GM10248 (cell line): ENCODE measurements at regions of chr22 and their contacts with region 1.

Region 1: GRCh38 chr22:22587577-22588188 is 28.6 kb upstream of the PRAME start:
- DNase-seq: no peak
- CTCF ChIP-seq: no peak

Region 2: GRCh38 chr22:22327723-22328122 is 260.0 kb before region 1 on chr22:
- CTCF ChIA-PET with region 1: no interaction called
- POLR2A ChIA-PET with region 1: no interaction called
- DNase-seq: no peak
- CTCF ChIP-seq: no peak

Region 3: GRCh38 chr22:22431271-22432220 is 156.1 kb before region 1 on chr22:
- CTCF ChIA-PET with region 1: interaction called, 10 read pairs
- POLR2A ChIA-PET with region 1: no interaction called
- DNase-seq: peak; percentile 84
- CTCF ChIP-seq: peak; percentile 52

Region 4: DNA sequence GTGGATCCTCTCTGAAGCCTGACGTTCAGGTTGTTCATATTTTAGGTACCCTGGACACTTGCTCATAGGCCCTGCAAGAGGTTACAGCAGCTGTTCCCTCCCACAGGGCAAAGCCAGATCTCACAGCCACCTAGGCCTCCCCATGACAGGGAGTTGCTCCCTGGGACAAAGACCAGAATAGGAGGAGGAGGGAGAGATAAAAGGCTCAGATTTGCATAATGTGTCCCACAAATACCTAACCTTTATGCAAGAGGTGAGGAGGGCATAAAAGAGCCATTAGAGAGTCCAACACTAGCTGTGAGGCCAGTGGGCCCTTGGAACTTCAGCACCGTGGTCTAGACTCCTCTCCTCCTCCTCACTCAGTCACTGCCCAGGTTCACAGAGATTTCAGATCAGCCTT is 113.0 kb before region 1 on chr22:
- CTCF ChIA-PET with region 1: no interaction called
- POLR2A ChIA-PET with region 1: no interaction called
- DNase-seq: no peak
- CTCF ChIP-seq: no peak

Region 5: GRCh38 chr22:22487869-22488597 is 99.7 kb before region 1 on chr22:
- CTCF ChIA-PET with region 1: no interaction called
- POLR2A ChIA-PET with region 1: no interaction called
- DNase-seq: no peak
- CTCF ChIP-seq: no peak

Region 6: DNA sequence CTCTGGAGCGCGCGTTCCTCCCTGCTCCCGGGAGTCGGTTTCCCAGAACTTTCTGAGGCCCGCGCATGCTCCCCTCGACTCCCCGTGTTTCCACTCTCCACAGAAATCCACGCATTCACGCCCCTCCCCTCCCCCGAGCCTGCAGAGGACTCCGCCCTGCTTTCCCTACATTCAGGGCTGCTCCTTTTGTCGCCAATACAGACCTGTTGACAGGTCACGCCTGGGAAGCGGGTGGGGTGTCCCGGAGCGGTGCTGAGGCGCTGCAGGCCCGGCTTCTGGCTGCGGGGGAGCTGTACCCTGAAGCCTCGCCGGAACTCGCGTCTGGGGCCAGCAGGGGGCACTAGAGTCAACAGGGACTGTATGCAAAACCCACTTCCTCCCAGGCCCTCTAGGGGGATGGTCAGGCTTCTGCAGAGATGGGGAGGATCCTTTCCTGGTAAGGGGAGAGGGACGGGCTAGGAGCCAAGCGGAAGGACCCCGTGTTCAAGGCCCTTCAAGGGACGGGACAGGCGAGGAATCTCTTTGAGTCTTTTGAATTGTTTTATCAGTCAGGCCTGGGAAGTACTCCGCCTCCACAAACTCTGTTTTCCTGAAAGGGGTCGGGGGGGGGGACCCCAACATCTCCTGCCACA is 28.6 kb before region 1 on chr22 and contains the start of gene PRAME:
- CTCF ChIA-PET with region 1: interaction called, 14 read pairs
- POLR2A ChIA-PET with region 1: no interaction called
- DNase-seq: peak; percentile 87
- CTCF ChIP-seq: peak; percentile 72

Region 7: GRCh38 chr22:22666307-22667091 is 78.8 kb after region 1 on chr22:
- CTCF ChIA-PET with region 1: interaction called, 21 read pairs
- POLR2A ChIA-PET with region 1: no interaction called
- DNase-seq: peak; percentile 58
- CTCF ChIP-seq: peak; percentile 61

Region 8: DNA sequence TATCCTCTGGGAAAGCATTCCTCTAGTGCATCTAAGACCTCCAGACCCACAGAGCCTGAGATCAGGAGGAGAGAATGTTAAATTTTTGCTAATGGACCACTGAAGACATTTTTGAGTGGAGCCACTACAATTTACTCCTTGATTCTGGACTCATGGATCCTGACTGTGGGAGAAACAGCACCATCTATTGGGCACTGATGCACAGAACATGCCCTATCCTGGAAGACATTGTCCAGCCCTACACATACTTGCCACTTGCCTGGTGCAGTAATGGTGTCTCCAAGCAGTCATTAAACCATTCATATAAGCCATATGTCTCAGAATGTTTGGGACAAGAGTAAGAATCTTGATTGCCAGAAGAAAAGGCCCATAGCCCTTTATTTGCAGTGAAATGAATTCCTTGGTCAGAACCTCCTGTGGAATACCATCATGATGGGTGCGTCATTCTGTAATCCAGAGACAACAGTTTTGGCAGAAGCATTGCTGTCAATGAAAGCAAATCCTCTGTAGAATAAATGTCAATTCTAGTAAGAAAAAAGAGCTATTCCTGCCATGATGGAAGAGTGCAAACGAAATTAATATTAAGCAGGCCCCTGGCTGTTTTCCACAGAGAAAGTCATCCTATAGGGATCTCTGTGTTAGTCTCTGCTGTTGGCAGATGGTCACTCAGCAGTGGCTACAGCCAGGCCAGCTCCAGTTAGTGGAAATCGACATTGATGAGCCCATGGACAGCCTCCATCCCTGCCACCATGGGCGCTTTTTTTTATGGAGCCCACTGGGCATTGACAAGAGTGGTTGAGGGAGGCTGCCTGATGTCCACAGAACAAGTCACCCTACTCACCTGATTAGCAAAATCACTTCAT is 100.2 kb after region 1 on chr22:
- CTCF ChIA-PET with region 1: interaction called, 21 read pairs
- POLR2A ChIA-PET with region 1: no interaction called
- DNase-seq: peak; percentile 37
- CTCF ChIP-seq: peak; percentile 77